HEK293 (cell line): ENCODE measurements at regions of chr20 and their contacts with region 1.

Region 1: DNA sequence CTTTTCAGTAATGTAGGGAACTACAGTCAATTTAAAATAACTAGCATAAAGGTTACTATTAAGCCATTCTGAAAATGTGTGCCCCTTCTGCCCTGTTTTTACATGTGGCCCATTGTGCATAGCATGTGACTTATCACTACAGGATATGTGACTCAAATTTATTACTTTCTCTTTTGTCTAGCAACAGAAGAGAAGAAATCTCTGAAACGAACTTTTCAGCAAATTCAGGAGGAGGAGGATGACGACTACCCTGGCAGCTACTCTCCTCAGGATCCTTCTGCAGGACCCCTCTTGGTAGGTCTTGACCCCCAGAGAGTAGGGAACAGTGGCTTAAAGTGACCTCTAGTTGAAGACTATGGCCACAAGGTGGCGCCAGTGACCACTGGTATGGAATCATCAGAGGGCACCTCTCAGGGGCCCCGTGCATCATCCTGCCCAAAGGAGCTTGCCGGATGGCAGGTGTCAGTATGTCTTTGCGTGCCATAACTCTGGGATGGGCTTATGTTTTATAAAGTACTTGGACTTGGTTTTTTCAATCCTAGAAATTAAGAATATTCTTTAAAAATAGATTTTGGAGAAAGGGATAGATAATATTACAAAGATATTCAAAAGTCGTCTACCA is 23.9 kb downstream of the RPRD1B start:
- H3K4me3 ChIP-seq: no peak overlapping the region
- H3K27ac ChIP-seq: no peak overlapping the region
- H3K4me1 ChIP-seq: peaks cover 3% of the 10 kb centered on the region; the same call in 1 of the 2 replicates
- CTCF ChIP-seq: peak; percentile 75; the same call in 1 of the 2 replicates

Region 2: DNA sequence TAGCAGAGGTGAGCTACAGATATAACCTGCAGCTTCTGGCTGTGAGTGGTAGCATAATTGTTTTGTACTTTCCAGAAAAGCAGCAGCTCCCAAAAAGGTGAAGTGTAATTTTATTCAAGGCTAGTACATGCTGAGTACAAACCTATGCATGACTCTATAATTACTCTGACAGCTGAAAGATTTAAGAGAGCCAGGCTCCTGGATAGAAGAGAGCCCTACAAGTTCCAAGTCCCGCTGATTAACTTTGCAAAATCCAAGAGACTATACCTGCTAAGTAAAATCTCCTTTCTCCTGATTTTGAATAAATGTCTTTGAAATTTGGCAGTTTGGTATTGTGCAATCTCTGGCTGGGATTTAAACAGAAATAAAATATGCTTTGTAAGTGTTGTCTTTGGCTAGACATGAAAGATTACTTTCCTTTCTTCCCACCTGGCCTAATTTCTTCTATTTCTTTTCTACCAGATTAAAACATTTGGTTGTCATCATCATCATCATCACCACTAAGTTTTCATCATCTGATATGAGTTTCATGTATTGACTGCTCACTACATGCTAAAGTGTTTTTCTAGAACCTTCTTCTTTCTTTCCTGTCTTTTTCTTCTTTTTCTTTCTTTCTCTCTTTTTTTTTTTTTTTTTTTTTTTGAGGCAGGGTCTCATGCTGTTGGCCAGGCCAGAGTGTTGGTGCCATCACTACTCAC is 284.0 kb before region 1 on chr20:
- CTCF ChIA-PET with region 1: no interaction called
- POLR2A ChIA-PET with region 1: no interaction called
- H3K4me3 ChIP-seq: no peak overlapping the region
- H3K27ac ChIP-seq: no peak overlapping the region
- H3K4me1 ChIP-seq: no peaks in the 10 kb centered on the region
- CTCF ChIP-seq: no peak

Region 3: DNA sequence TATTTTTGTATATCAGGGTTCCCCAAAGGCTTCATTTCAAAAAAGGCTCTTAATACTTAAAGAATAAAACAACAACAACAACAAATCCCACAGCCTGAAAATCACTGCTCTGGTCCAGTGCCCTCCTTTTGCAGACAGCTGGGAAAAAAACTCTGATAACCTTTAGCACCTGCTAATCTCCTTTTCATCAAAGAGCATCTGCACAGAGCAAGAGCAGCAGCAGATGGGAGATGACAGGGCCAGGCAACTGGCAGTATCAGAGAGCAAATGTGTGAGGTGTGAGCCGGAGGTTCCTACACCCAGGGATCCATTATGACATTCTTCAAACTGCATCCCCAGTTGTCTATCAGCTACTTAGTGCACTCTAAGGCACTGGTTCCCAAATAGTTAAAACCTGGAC is 49.9 kb before region 1 on chr20:
- CTCF ChIA-PET with region 1: interaction called, 10 read pairs
- POLR2A ChIA-PET with region 1: no interaction called
- H3K4me3 ChIP-seq: no peak overlapping the region
- H3K27ac ChIP-seq: no peak overlapping the region
- H3K4me1 ChIP-seq: no peaks in the 10 kb centered on the region
- CTCF ChIP-seq: no peak

Region 4: GRCh38 chr20:38043512-38044300 is 13.8 kb before region 1 on chr20:
- CTCF ChIA-PET with region 1: interaction called, 31 read pairs
- POLR2A ChIA-PET with region 1: no interaction called
- H3K4me3 ChIP-seq: no peak overlapping the region
- H3K27ac ChIP-seq: no peak overlapping the region
- H3K4me1 ChIP-seq: no peaks in the 10 kb centered on the region
- CTCF ChIP-seq: no peak

Region 5: DNA sequence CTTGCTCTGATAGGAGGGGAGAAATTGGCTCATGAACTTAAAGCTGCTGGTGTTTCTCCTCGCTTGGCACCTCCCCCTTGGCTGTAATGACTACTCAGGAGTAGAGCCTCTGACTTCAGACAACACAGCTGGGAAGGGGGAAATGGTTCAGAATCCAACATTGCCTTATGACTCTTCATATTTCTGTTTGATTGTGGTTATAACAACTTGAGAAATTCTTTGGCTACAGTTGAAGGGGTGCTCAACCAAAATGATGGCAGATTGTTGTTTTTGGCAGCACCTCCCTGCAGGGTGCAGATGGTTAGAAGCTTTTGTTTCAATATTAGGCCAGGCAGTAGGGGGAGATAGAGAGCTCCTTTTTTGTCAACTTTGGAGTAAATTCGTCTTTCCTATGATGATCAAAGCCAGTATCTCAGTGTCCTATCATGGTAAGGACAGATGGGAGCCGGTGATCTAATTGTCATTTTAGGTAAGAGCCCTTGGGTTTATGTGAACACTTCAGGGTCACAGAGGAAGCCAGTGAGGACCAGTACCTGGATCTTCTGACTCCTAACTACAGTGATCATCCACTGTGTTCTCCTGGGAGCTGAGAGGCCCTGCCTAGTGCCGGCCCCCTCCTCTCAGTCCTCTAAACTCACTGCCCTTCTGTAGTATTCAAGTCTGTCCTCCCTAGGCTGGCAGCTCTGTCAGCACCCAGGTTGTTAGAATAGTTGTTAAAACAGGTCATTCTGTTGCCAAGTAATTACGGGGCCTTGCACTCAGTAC is 16.0 kb after region 1 on chr20:
- CTCF ChIA-PET with region 1: interaction called, 24 read pairs
- POLR2A ChIA-PET with region 1: interaction called, 3 read pairs
- H3K4me3 ChIP-seq: no peak overlapping the region
- H3K27ac ChIP-seq: no peak overlapping the region
- H3K4me1 ChIP-seq: peaks cover 7% of the 10 kb centered on the region; the same call in 1 of the 2 replicates
- CTCF ChIP-seq: no peak

Region 6: DNA sequence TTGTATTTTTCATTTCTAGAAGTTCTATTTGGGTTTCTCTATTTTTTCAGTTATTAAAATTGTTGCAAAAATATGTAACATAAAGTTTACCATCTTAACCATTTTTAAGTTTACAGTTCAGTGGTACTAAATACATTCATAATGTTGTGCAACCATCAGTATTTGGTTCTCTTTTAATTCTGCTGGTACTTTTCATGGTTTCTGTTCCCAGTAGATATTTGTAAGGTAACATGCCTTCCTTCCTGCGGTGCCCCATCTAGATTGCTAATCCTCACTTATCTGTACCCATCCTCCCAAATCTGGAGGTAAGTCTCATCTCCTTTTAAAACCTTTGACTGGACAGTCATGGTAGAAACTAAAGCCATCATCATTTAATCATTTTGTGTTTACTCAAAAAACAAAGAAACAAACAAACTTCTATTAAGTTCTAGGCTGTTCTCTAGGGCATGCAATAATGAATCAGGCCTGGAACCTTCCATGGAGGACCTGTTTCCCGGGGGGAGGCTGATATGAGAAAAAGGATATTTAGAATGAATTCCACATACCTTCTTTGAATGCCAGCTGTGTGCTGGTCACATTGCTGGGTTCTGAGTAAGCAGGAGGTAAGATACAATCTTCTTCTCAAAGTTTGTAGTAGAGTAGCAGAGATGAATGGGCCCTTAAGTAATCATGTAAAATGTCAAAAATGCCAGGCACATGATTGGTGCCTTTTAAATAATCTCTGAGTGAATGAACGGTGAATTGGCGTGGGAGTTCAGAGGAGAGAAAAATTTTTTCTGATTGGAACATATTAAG is 60.0 kb after region 1 on chr20:
- CTCF ChIA-PET with region 1: no interaction called
- POLR2A ChIA-PET with region 1: no interaction called
- H3K4me3 ChIP-seq: no peak overlapping the region
- H3K27ac ChIP-seq: no peak overlapping the region
- H3K4me1 ChIP-seq: no peaks in the 10 kb centered on the region
- CTCF ChIP-seq: no peak

Region 7: GRCh38 chr20:38165089-38165989 is 107.9 kb after region 1 on chr20 and contains the start of gene TGM2:
- CTCF ChIA-PET with region 1: interaction called, 12 read pairs
- POLR2A ChIA-PET with region 1: no interaction called
- H3K4me3 ChIP-seq: peak within 1 kb of the TSS; percentile 32
- H3K27ac ChIP-seq: no peak within 1 kb of the TSS
- H3K4me1 ChIP-seq: no peaks in the 10 kb centered on the region
- CTCF ChIP-seq: peak; percentile 88

Region 8: DNA sequence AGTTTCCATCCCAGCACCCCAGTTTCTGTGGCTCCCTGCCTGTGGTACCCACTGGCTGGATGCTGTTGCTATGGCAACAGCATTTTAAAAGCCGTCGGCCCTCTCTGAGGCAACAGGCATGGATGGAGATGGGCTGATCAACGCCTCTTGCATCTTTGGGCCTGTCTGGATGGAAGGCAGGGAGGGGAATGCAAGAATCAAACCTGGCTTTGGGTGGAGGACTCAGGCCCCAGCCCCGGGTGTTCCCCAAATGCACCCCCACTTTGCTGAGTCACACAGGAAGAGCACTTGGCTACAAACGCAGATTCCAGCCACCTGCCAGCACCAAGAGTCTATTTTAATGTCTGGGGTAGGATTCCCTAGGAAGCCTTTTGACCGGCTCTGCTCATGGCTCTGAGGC is 153.3 kb after region 1 on chr20:
- CTCF ChIA-PET with region 1: interaction called, 11 read pairs
- POLR2A ChIA-PET with region 1: no interaction called
- H3K4me3 ChIP-seq: no peak overlapping the region
- H3K27ac ChIP-seq: no peak overlapping the region
- H3K4me1 ChIP-seq: no peaks in the 10 kb centered on the region
- CTCF ChIP-seq: no peak